ENCODE measurements at regions of chrX and their contacts with region 1.

Region 1: DNA sequence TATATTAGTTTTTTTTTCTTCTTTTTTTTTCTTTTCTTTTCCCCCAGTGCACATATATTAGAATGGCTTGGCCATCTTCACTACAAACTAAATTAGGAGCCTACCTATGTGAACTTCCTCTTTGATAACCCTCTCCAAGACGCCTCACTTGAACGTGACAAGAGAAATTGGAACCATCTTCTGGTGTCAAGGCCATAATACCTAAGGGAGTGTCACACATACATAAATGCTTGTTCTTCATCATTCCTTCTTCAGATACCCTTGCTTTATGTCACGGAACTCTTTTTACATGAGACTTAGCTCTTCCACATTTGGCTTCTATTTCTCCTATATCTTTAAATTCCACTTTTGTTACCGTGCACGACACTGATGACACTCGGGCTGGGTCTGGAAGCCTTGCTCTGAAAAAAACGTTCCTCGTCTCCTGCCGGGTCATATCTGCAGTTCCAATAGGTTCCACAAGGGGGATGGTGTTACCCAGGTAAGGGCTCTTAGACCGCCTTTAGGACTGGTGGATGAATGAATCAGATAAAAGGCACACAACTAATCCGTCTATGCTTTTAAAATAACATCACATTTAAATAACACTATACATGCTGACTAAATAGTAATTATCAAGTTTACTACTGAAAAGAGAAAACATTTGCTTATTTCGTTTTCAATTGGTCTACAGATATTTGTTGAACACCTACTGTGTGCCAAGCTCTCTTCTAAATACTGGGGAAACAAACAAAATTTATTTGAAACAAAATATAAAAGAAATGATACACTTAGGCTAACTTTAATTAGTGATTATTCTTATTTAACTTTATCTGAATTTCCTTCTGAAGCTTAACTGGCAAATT is 19.9 kb downstream of the DGAT2L6 start:
- DNase-seq: peak; percentile 68
- H3K4me3 Mint-ChIP-seq: no peak overlapping the region
- H3K27ac Mint-ChIP-seq: no peak overlapping the region
- H3K4me1 Mint-ChIP-seq: peaks cover 2% of the 10 kb centered on the region
- H3K27me3 Mint-ChIP-seq: peaks cover 2% of the 10 kb centered on the region

Region 2: DNA sequence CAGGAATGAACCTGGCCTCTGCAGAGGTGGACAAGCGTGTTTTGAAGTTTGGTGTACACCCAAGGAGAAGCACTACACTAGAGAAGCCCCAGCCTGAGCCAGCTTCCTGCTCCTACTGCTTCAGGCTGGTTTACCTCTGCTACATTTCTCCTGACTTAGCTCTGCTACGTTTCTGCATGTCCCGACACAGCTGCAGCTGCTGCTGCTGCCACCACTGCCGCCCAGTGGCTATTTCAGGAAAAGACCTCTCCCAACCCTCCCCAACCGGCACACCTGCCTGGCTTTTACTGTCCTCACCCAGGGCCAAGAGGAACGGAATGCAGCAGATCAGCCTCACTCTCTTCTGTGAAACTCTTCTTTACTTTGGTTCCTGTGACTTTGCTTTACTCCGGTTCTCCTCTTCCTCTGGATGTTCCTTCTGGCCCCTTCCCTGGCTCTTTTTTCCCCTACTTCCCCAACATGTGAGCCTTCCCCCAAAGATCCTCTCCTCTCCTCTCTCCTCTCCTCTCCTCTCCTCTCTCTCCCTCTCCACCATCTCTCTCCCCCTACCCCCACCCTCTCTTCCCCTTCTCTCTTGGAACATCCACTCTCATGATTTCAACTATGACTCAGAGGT is 65.9 kb after region 1 on chrX:
- CTCF ChIA-PET with region 1: interaction called, 6 read pairs
- POLR2A ChIA-PET with region 1: no interaction called
- intact Hi-C with region 1: loop called (anchors 1 kb)
- DNase-seq: peak; percentile 50
- H3K4me3 Mint-ChIP-seq: no peak overlapping the region
- H3K27ac Mint-ChIP-seq: no peak overlapping the region
- H3K4me1 Mint-ChIP-seq: no peaks in the 10 kb centered on the region
- H3K27me3 Mint-ChIP-seq: no peaks in the 10 kb centered on the region

Region 3: GRCh38 chrX:70664726-70665125 is 467.5 kb after region 1 on chrX:
- CTCF ChIA-PET with region 1: no interaction called
- POLR2A ChIA-PET with region 1: no interaction called
- intact Hi-C with region 1: loop called (anchors 2 kb)
- DNase-seq: peak; percentile 7
- H3K4me3 Mint-ChIP-seq: no peak overlapping the region
- H3K27ac Mint-ChIP-seq: no peak overlapping the region
- H3K4me1 Mint-ChIP-seq: no peaks in the 10 kb centered on the region
- H3K27me3 Mint-ChIP-seq: no peaks in the 10 kb centered on the region

Measured in activated CD4-positive, alpha-beta memory T cell treated with anti-CD3 and anti-CD28 coated beads for 36 hours (primary cell).